ENCODE measurements at regions of chr17 and their contacts with region 1.

Region 1: DNA sequence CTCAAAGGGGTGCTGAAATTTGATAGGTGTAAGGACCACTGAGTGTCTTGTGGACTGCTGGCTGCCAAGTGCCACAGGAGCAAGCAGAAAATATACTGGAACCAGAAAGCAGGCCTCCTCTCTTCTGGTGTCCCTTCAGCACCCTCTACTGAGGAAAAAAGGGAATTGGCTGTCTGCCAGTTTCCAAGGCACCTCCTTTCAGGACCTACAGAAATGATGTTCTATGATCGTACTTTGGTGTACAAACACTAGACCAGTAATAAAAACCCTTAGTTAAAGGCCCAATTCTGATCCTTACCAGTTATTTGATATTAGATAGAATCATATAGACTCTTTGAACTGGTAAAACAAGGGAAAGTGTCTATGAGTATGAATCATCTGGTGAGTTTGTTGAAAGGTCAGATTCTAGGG is 35.8 kb upstream of the BCAS3 start:
- DNase-seq: no peak
- ATAC-seq: peak; percentile 70

Region 2: DNA sequence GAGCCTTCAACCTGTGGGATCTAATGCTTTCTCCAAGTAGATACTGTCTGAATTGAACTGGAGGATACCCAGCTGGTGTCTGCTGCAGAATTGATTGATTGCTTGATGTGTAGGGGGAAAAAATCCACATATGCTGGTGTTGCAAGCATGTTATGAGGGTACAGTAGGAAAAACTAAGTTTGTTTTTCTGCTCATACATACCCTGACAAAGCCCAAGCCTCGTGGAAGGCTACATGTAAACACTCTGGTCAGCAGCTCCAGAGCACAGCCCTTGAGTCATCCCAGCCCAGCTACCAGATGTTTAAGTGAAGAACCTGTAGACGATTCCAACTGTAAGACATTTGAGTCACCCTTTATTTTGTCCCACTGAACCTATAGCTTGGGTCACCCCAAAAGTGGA is 106.4 kb before region 1 on chr17:
- intact Hi-C with region 1: no loop called
- DNase-seq: no peak
- ATAC-seq: no peak

Region 3: DNA sequence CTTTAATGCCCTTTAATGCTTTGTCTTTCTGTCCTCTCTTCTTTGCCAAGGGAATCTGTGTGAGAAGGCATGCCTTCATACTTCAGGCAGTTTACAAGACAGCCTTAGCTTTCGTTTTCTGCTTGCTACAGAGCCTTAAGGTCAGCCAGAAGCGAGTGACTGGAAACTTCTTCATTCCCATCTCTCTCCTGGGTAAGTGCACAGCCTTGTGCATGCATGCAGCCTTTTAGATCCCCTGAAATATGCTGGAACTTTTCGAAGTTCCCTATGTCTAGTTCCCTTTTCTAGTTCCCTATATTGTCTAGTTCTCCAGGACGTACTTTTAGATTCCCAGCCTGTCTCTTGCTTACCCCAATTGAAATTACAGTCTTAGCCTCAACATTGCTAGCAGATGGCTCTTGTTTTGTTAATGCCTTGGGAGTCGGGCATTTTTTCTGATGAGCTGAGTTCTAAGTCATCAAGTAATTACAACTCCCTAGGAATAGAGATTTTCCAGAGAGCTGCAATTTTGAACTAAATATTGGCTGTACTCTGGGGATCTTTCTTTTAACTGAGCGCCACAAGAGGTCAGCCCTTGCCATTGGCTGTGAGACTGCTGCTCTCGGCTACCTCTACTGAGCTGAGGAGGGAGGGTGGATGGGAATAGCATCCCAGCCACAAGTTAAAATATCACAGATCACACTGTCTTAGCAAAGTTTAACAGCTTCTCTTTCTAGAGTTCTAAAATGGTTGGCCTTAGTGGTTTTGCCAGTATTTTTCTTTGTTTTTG is 64.5 kb before region 1 on chr17:
- intact Hi-C with region 1: loop called (anchors 2 kb)
- DNase-seq: no peak
- ATAC-seq: peak; percentile 90

Region 4: GRCh38 chr17:60599620-60600489 is 42.0 kb before region 1 on chr17 and contains the start of gene PPM1D:
- intact Hi-C with region 1: loop called (anchors 5 kb)
- DNase-seq: peak; percentile 100
- ATAC-seq: peak; percentile 97
- total RNA-seq, gene PPM1D: 7.8 TPM

Measured in Right ventricle myocardium superior (tissue), 1 donor.